ENCODE measurements at regions of chr4 and their contacts with region 1.

Region 1: GRCh38 chr4:99117876-99118693 is 26.0 kb downstream of the ADH4 start:
- DNase-seq: peak in 1 of 2 donors; percentile 23
- ATAC-seq: no peak
- H3K4me3 ChIP-seq: no peak overlapping the region
- H3K4me3 Mint-ChIP-seq: no peak overlapping the region
- H3K27ac ChIP-seq: no peak overlapping the region
- H3K27ac Mint-ChIP-seq: no peak overlapping the region
- H3K4me1 ChIP-seq: no peaks in the 10 kb centered on the region
- H3K4me1 Mint-ChIP-seq: no peaks in the 10 kb centered on the region
- H3K27me3 ChIP-seq: no peaks in the 10 kb centered on the region
- H3K27me3 Mint-ChIP-seq: no peaks in the 10 kb centered on the region
- CTCF ChIP-seq: peak; percentile 54

Region 2: GRCh38 chr4:99149426-99150019 is 31.4 kb after region 1 on chr4:
- intact Hi-C with region 1: no loop called
- DNase-seq: no peak
- ATAC-seq: no peak
- H3K4me3 ChIP-seq: no peak overlapping the region
- H3K4me3 Mint-ChIP-seq: no peak overlapping the region
- H3K27ac ChIP-seq: no peak overlapping the region
- H3K27ac Mint-ChIP-seq: no peak overlapping the region
- H3K4me1 ChIP-seq: no peaks in the 10 kb centered on the region
- H3K4me1 Mint-ChIP-seq: no peaks in the 10 kb centered on the region
- H3K27me3 ChIP-seq: no peaks in the 10 kb centered on the region
- H3K27me3 Mint-ChIP-seq: peaks cover 0 to 6% of the 10 kb centered on the region in 2 donors
- CTCF ChIP-seq: no peak

Region 3: DNA sequence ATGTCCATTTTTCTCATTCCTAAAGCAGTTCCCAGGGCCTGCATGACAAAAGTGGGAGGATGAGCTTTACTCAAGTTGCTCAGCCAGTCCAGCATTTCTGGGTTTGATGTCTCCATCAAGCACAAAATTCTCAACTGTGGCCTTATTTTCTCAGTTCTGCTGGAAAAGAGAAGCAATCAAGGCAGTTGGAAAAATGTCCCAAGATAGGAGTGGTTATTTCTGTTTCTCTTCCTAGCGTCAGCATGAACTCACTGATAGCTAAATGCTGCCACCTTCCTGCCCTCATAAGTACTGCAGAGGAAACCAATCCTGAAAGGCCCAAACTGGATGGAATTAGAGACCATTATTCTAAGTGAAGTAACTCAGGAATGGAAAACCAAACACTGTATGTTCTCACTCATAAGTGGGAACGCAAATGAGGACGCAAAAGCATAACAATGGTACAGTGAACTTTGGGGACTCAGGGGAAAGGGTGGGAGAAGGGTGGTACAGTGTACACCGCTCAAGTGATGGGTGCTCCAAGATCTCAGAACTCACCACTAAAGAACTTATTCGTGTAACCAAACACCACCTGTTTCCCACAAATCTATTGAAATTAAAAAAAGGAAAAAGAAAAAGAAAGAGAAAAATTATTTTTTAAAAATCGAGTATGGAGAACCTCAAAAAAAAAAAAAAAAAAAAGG is 287.5 kb after region 1 on chr4:
- intact Hi-C with region 1: loop called (anchors 1 kb)
- DNase-seq: peak; percentile 32 to 78
- ATAC-seq: peak; percentile 76 to 92 (median 82)
- H3K4me3 ChIP-seq: no peak overlapping the region
- H3K4me3 Mint-ChIP-seq: no peak overlapping the region
- H3K27ac ChIP-seq: no peak overlapping the region
- H3K27ac Mint-ChIP-seq: no peak overlapping the region
- H3K4me1 ChIP-seq: peaks cover 2% of the 10 kb centered on the region
- H3K4me1 Mint-ChIP-seq: peaks cover 0 to 4% of the 10 kb centered on the region in 2 donors
- H3K27me3 ChIP-seq: no peaks in the 10 kb centered on the region
- H3K27me3 Mint-ChIP-seq: peaks cover 0 to 6% of the 10 kb centered on the region in 2 donors
- CTCF ChIP-seq: peak; percentile 92

Region 4: GRCh38 chr4:99462875-99463464 is 344.9 kb after region 1 on chr4:
- intact Hi-C with region 1: loop called (anchors 2 kb)
- DNase-seq: peak in 1 of 2 donors; percentile 70
- ATAC-seq: peak; percentile 64 to 77 (median 72)
- H3K4me3 ChIP-seq: no peak overlapping the region
- H3K4me3 Mint-ChIP-seq: no peak overlapping the region
- H3K27ac ChIP-seq: no peak overlapping the region
- H3K27ac Mint-ChIP-seq: no peak overlapping the region
- H3K4me1 ChIP-seq: no peaks in the 10 kb centered on the region
- H3K4me1 Mint-ChIP-seq: no peaks in the 10 kb centered on the region
- H3K27me3 ChIP-seq: peaks cover 2% of the 10 kb centered on the region
- H3K27me3 Mint-ChIP-seq: peaks cover 12 to 31% of the 10 kb centered on the region in 2 donors
- CTCF ChIP-seq: peak; percentile 67

Measured in natural killer cell (primary cell).